ENCODE measurements at regions of chr14 and their contacts with region 1.

Region 1: DNA sequence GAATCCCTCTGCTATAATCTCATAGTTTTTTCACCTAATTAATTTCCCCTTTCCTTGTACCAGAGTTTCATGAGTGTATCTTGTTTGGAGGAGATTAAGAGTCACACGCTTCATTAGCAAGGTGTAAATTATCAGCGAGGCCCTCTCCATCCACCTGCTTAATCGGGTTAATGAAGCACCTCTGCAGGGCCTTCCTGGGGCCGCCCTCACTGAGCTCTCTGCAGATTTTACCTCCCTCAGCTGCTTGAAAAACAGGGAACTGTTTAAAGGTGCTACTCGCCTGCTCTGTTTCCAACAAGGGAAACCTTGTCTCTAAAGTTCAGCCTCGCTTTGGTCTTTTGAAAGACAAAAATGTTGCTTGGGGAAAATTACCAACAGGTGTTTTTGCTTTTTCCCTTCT is 35.8 kb downstream of the OTX2 start:
- DNase-seq: no peak
- ATAC-seq: no peak
- H3K4me3 ChIP-seq: no peak overlapping the region
- H3K27ac ChIP-seq: no peak overlapping the region
- H3K4me1 ChIP-seq: no peaks in the 10 kb centered on the region
- H3K27me3 ChIP-seq: peaks cover 93% of the 10 kb centered on the region
- CTCF ChIP-seq: no peak

Region 2: DNA sequence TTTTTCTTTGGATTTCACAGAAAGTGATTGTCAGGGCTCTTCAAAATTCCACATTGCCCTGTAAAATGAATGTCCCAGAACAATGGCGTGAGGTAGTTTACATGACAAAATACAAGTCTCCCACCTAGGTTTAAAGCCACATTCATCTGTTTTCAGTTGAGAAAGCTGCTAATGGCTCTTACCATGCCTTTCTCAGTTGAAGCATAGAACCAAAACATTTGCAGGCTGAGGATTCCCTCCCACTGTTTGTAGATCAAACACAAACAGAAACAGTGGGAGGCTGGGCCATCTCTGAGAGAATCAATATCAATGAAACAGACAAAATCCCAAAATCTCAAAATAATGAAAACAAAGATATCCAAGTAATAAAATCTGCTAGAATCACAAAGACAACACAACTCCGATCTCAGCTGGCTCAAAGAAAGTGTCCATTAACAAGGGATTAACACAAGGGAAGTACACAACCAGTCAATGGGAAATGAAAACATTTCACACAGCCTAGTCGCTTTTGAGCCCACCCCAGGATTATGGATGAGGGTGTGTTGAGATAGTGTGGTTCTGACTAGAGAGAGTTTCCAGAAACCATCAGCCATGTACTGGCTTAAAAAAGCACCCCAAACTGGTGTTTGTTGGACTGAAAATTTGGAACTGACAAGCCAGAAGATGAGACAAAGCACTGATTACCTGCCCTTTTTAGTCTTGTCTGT is 249.4 kb before region 1 on chr14:
- CTCF ChIA-PET with region 1: no interaction called
- POLR2A ChIA-PET with region 1: no interaction called
- intact Hi-C with region 1: no loop called
- DNase-seq: no peak
- ATAC-seq: no peak
- H3K4me3 ChIP-seq: no peak overlapping the region
- H3K27ac ChIP-seq: no peak overlapping the region
- H3K4me1 ChIP-seq: peaks cover 3% of the 10 kb centered on the region; the same call in 1 of the 2 replicates
- H3K27me3 ChIP-seq: peaks cover 81% of the 10 kb centered on the region
- CTCF ChIP-seq: no peak

Region 3: GRCh38 chr14:56579345-56580220 is 194.9 kb before region 1 on chr14 and contains the start of gene TMEM260:
- CTCF ChIA-PET with region 1: no interaction called
- POLR2A ChIA-PET with region 1: no interaction called
- intact Hi-C with region 1: no loop called
- DNase-seq: peak; percentile 98
- ATAC-seq: peak; percentile 78
- H3K4me3 ChIP-seq: peak within 1 kb of the TSS; percentile 81
- H3K27ac ChIP-seq: peak within 1 kb of the TSS; percentile 61
- H3K4me1 ChIP-seq: peaks cover 42% of the 10 kb centered on the region
- H3K27me3 ChIP-seq: peaks cover 28% of the 10 kb centered on the region; the same call in 1 of the 2 replicates
- CTCF ChIP-seq: peak; percentile 98
- total RNA-seq, gene TMEM260: 17.8 and 28.6 TPM in 2 replicates

Region 4: DNA sequence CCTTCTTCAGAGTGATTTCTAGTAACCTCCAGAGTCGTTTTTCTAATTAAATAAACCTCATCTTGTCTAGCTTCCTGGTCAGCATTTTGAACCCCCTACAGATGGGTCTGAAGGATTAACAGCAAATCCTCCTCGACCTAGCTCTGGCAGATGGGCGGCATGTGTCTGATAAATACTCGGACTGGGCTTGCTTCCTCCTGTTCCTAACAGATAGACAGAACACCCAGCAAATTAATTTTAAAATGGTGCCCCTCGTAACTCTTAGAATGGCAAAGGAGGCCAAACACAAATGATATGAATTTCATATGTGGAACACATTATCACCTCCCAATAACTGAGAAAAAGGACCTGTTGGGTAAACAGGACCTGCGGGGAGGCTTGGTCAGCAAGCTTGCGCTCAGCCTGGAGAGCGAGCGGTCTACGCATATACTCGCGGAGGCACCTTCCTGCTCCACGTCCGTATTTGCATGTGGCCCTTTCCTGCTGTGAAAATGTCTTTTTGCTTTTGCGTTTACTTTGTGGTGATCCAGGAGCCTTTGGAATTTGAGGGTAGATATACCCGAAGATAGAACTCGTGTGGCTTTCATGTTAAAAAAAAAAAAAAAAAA is 43.9 kb before region 1 on chr14:
- CTCF ChIA-PET with region 1: no interaction called
- POLR2A ChIA-PET with region 1: interaction called, 12 read pairs
- intact Hi-C with region 1: no loop called
- DNase-seq: no peak
- ATAC-seq: no peak
- H3K4me3 ChIP-seq: no peak overlapping the region
- H3K27ac ChIP-seq: no peak overlapping the region
- H3K4me1 ChIP-seq: peaks cover 3% of the 10 kb centered on the region; the same call in 1 of the 2 replicates
- H3K27me3 ChIP-seq: peaks cover 81% of the 10 kb centered on the region
- CTCF ChIP-seq: no peak

Region 5: DNA sequence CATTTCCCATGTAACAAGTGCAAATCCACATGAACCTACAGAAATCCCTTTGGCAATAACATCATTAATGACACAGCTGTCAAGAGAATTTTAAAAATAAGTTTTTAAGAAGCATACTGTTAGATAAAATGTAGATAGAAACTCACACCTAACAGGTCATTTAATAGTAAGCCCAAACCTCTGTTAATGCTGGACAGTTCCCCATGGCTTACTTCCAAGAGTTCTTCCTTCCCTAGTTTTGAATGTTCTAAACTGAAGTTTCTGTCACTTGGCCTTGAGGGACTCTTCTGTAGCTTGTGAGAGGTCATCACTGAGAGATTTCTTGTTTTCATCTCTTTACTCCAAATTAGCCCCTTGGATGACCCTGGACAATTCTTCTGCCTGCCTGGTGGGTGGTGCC is 13.0 kb after region 1 on chr14:
- CTCF ChIA-PET with region 1: no interaction called
- POLR2A ChIA-PET with region 1: no interaction called
- intact Hi-C with region 1: no loop called
- DNase-seq: no peak
- ATAC-seq: no peak
- H3K4me3 ChIP-seq: no peak overlapping the region
- H3K27ac ChIP-seq: no peak overlapping the region
- H3K4me1 ChIP-seq: no peaks in the 10 kb centered on the region
- H3K27me3 ChIP-seq: peaks cover 28% of the 10 kb centered on the region; the same call in 1 of the 2 replicates
- CTCF ChIP-seq: no peak

Region 6: DNA sequence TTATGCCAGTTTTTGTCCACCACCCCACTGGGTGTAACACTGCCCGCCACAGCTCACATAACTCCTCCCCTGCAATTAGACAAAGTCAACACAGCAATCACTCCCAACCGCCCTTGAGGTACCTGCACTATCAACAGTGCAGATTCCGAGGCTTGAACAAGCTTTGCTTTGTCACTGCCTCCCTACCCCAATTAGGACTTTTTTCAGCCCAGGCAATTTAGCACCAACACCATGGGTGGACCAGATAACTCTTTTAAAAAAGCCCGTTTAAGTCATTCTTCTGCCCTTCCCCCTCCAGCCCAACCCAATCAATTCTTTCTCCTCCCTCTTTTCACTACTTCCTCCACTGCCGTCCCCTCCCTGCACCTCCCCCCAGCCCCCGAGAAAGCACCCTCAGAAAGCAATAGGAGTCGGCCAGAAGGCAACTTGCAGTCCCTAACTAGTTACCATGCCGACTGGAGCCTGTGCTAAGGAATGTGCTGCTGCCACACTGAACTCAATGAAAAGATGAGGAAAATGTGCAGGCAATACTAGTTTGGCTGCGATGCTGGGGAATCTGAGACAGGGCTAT is 81.5 kb after region 1 on chr14:
- CTCF ChIA-PET with region 1: no interaction called
- POLR2A ChIA-PET with region 1: no interaction called
- intact Hi-C with region 1: no loop called
- DNase-seq: no peak
- ATAC-seq: no peak
- H3K4me3 ChIP-seq: no peak overlapping the region
- H3K27ac ChIP-seq: no peak overlapping the region
- H3K4me1 ChIP-seq: no peaks in the 10 kb centered on the region
- H3K27me3 ChIP-seq: peaks cover 89% of the 10 kb centered on the region
- CTCF ChIP-seq: no peak